Heart right ventricle (tissue), 16 donors: ENCODE measurements at regions of chr3 and their contacts with region 1.

Region 1: GRCh38 chr3:188286087-188286513 is 132.1 kb downstream of the LPP start:
- DNase-seq: peak in 1 of 2 donors; percentile 59
- ATAC-seq: peak; percentile 70 to 93 (median 81)
- H3K4me3 ChIP-seq: no peak overlapping the region
- H3K27ac ChIP-seq: peak overlapping the region; percentile 20 to 85 (median 74)
- H3K4me1 ChIP-seq: peaks cover 15 to 85% (median 65%) of the 10 kb centered on the region in 9 donors
- H3K27me3 ChIP-seq: no peaks in the 10 kb centered on the region
- CTCF ChIP-seq: no peak

Region 2: DNA sequence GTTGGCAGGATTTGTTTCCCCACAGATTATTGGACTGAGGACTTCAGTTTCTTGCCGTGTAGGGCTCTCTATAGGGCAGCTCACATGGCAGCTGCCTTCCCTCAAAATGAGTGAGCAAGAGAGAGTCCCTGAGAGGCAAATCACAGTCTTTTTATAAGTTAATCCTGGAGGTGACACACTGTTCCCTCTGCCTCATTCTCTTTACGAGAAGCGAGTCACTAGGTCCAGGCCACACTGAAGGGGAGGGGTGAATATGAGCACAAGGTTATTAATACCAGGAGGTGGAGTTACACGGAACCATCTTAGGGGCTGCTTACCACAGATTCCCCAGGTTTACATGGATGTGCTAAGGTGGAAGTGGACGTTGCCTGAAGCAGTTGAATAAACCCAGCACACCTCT is 55.1 kb before region 1 on chr3:
- intact Hi-C with region 1: no loop called
- DNase-seq: peak in 1 of 2 donors; percentile 29
- ATAC-seq: peak; percentile 73 to 96 (median 84)
- H3K4me3 ChIP-seq: no peak overlapping the region
- H3K27ac ChIP-seq: peak overlapping the region; percentile 42 to 80 (median 68)
- H3K4me1 ChIP-seq: peaks cover 0 to 71% (median 25%) of the 10 kb centered on the region in 9 donors
- H3K27me3 ChIP-seq: no peaks in the 10 kb centered on the region
- CTCF ChIP-seq: no peak

Region 3: DNA sequence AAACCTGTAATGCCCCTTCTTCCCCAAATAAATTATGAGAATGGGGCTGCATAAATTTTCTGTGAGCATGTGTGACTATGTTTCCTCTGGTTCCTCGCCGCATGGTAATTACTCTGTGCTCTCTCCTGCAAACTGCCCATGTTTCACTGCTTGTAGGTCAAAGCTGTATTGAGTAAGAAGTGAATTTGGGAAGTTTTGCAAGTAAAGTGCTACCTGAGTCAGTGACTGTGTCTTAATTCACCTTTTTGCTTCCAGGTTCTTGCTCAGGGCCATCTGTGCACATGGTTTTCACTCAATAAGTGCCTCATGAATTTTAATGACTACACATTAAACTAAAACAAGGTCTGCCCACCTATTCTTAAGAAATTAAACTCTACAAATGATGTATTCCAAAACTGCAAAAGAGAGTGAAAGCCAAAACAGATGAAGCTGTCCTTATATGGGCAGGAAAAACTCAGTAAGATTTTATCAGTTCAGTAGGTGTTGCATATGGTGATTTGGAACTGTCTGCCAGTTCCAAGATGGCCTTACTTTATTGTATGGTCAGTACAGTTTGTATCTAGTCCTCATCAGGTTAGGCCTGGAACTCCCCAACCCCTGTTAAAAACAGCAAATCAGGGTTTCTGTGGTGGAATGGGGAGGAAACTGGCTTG is 32.2 kb before region 1 on chr3:
- intact Hi-C with region 1: no loop called
- DNase-seq: no peak
- ATAC-seq: no peak
- H3K4me3 ChIP-seq: no peak overlapping the region
- H3K27ac ChIP-seq: no peak overlapping the region
- H3K4me1 ChIP-seq: peaks cover 0 to 38% (median 24%) of the 10 kb centered on the region in 9 donors
- H3K27me3 ChIP-seq: no peaks in the 10 kb centered on the region
- CTCF ChIP-seq: no peak

Region 4: GRCh38 chr3:188326111-188326510 is 40.0 kb after region 1 on chr3:
- intact Hi-C with region 1: loop called in 1 of 10 experiments (anchors 5 kb)
- DNase-seq: no peak
- ATAC-seq: peak; percentile 35 to 72 (median 62)
- H3K4me3 ChIP-seq: no peak overlapping the region
- H3K27ac ChIP-seq: peak overlapping the region; percentile 5 to 68 (median 54)
- H3K4me1 ChIP-seq: peaks cover 3 to 65% (median 31%) of the 10 kb centered on the region in 9 donors
- H3K27me3 ChIP-seq: no peaks in the 10 kb centered on the region
- CTCF ChIP-seq: no peak

Region 5: DNA sequence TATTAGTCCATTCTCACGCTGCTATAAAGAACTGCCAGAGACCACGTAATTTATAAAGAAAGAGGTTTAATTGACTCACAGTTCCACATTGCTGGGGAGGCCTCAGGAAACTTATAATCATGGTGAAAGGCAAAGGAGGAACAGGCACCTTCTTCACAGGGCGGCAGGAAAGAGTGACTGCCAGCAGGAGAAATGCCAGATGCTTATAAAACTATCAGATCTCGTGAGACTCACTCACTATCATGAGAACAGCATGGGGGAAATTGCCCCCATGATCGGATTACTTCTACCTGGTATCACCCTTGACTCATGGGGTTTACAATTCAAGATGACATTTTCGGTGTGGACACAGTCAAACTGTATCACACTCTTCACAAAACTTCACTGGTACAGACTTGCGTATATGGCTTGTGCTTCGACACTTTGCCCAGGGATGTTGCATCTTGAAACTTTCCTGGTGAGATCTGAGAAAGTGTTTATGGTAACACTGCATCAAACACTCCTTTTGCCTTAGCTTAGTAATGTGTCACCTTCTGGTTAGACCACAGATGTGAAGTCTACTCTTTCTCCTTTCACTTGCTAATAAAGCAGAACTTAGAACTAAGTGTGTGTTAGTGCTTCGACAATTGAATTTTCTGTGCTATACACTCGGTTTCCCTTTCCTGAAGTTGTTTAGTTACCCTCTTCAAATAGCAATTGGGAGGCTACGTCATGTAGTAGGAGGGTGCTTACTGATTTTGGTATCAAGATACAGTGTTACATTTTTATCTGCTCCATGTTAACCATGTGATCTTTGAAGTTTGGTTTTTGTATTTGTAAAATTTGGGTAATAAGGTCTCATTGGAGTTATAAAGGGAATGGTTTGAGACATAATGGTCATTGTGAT is 53.6 kb after region 1 on chr3:
- intact Hi-C with region 1: loop called in 1 of 10 experiments (anchors 5 kb)
- DNase-seq: no peak
- ATAC-seq: no peak
- H3K4me3 ChIP-seq: no peak overlapping the region
- H3K27ac ChIP-seq: peak overlapping the region in 6 of 10 donors; percentile 2 to 33 (median 10)
- H3K4me1 ChIP-seq: peaks cover 0 to 55% (median 26%) of the 10 kb centered on the region in 9 donors
- H3K27me3 ChIP-seq: no peaks in the 10 kb centered on the region
- CTCF ChIP-seq: no peak